ENCODE measurements at regions of chr6 and their contacts with region 1.

Region 1: GRCh38 chr6:36196880-36197548 is 470 bp downstream of the BRPF3 start:
- DNase-seq: peak; percentile 99 to 100 (median 99)
- ATAC-seq: peak; percentile 98 to 100 (median 98)
- H3K4me3 ChIP-seq: peak overlapping the region; percentile 40 to 85 (median 70)
- H3K27ac ChIP-seq: peak overlapping the region; percentile 90 to 97 (median 94)
- H3K4me1 ChIP-seq: peaks cover 0 to 26% (median 14%) of the 10 kb centered on the region in 12 donors
- H3K27me3 ChIP-seq: no peaks in the 10 kb centered on the region
- CTCF ChIP-seq: no peak
- POLR2A ChIP-seq: peak; percentile 41 to 54

Region 2: DNA sequence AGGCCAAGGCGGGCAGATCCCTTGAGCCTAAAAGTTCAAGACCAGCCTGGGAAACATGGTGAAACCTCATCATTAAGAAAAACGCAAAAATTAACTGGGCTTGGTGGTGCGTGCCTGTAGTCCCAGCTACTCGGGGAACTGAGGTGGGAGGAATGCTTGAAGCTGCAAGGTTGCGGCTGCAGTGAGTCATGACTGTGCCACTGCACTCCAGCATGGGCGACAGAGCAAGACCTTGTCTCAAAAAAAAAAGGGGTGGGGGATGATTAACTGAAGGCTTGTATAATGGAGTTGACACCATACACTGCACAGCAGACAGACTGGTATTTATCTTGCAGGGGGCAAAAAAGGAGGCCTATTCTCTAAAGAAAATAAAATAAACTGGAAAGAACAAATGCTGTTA is 303.8 kb before region 1 on chr6:
- intact Hi-C with region 1: no loop called
- DNase-seq: no peak
- ATAC-seq: no peak
- H3K4me3 ChIP-seq: no peak overlapping the region
- H3K27ac ChIP-seq: no peak overlapping the region
- H3K4me1 ChIP-seq: no peaks in the 10 kb centered on the region
- H3K27me3 ChIP-seq: no peaks in the 10 kb centered on the region
- CTCF ChIP-seq: no peak
- POLR2A ChIP-seq: no peak

Region 3: GRCh38 chr6:36027501-36028087 is 169.4 kb before region 1 on chr6 and contains the start of gene MAPK14:
- intact Hi-C with region 1: loop called (anchors 1 to 5 kb)
- DNase-seq: peak; percentile 99 to 100 (median 99)
- ATAC-seq: peak; percentile 94 to 98 (median 97)
- H3K4me3 ChIP-seq: peak within 1 kb of the TSS; percentile 69 to 100 (median 92)
- H3K27ac ChIP-seq: peak within 1 kb of the TSS; percentile 83 to 96 (median 92)
- H3K4me1 ChIP-seq: peaks cover 0 to 46% (median 20%) of the 10 kb centered on the region in 12 donors
- H3K27me3 ChIP-seq: peaks cover 4 to 16% (median 7%) of the 10 kb centered on the region in 9 donors
- CTCF ChIP-seq: peak; percentile 85 to 97 (median 90)
- POLR2A ChIP-seq: peak; percentile 78 to 99
- total RNA-seq, gene MAPK14: 24.3 to 46.5 (median 34.9) TPM

Region 4: GRCh38 chr6:36033935-36034334 is 163.1 kb before region 1 on chr6:
- intact Hi-C with region 1: loop called in 6 of 10 experiments (anchors 5 kb)
- DNase-seq: no peak
- ATAC-seq: peak in 1 of 4 donors; percentile 61
- H3K4me3 ChIP-seq: no peak overlapping the region
- H3K27ac ChIP-seq: peak overlapping the region in 1 of 12 donors; percentile 96
- H3K4me1 ChIP-seq: peaks cover 12 to 100% (median 67%) of the 10 kb centered on the region in 12 donors
- H3K27me3 ChIP-seq: no peaks in the 10 kb centered on the region
- CTCF ChIP-seq: no peak
- POLR2A ChIP-seq: no peak

Region 5: GRCh38 chr6:36123257-36124139 is 73.5 kb before region 1 on chr6:
- intact Hi-C with region 1: loop called (anchors 2 to 5 kb)
- DNase-seq: peak; percentile 72 to 89 (median 80)
- ATAC-seq: peak; percentile 47 to 85 (median 80)
- H3K4me3 ChIP-seq: peak overlapping the region in 1 of 12 donors; percentile 1
- H3K27ac ChIP-seq: peak overlapping the region in 1 of 12 donors; percentile 63
- H3K4me1 ChIP-seq: peaks cover 0 to 75% (median 11%) of the 10 kb centered on the region in 12 donors
- H3K27me3 ChIP-seq: no peaks in the 10 kb centered on the region
- CTCF ChIP-seq: peak; percentile 37 to 67 (median 56)
- POLR2A ChIP-seq: no peak

Region 6: GRCh38 chr6:36129941-36130666 is 66.9 kb before region 1 on chr6 and contains the start of gene MAPK13:
- intact Hi-C with region 1: loop called in 3 of 10 experiments (anchors 2 to 5 kb)
- DNase-seq: no peak
- ATAC-seq: no peak
- H3K4me3 ChIP-seq: peak within 1 kb of the TSS in 11 of 12 donors; percentile 20 to 64 (median 45)
- H3K27ac ChIP-seq: peak within 1 kb of the TSS in 1 of 12 donors; percentile 84
- H3K4me1 ChIP-seq: peaks cover 0 to 57% (median 14%) of the 10 kb centered on the region in 12 donors
- H3K27me3 ChIP-seq: peaks cover 0 to 25% (median 5%) of the 10 kb centered on the region in 9 donors
- CTCF ChIP-seq: no peak
- POLR2A ChIP-seq: no peak
- total RNA-seq, gene MAPK13: 0.24 to 16.8 (median 0.56) TPM

Region 7: GRCh38 chr6:36752886-36753506 is 556.0 kb after region 1 on chr6:
- intact Hi-C with region 1: no loop called
- DNase-seq: no peak
- ATAC-seq: peak in 3 of 4 donors; percentile 25 to 58 (median 28)
- H3K4me3 ChIP-seq: no peak overlapping the region
- H3K27ac ChIP-seq: peak overlapping the region in 1 of 12 donors; percentile 52
- H3K4me1 ChIP-seq: peaks cover 0 to 67% (median 1%) of the 10 kb centered on the region in 12 donors
- H3K27me3 ChIP-seq: no peaks in the 10 kb centered on the region
- CTCF ChIP-seq: no peak
- POLR2A ChIP-seq: no peak